ENCODE measurements at regions of chr10 and their contacts with region 1.

Region 1: DNA sequence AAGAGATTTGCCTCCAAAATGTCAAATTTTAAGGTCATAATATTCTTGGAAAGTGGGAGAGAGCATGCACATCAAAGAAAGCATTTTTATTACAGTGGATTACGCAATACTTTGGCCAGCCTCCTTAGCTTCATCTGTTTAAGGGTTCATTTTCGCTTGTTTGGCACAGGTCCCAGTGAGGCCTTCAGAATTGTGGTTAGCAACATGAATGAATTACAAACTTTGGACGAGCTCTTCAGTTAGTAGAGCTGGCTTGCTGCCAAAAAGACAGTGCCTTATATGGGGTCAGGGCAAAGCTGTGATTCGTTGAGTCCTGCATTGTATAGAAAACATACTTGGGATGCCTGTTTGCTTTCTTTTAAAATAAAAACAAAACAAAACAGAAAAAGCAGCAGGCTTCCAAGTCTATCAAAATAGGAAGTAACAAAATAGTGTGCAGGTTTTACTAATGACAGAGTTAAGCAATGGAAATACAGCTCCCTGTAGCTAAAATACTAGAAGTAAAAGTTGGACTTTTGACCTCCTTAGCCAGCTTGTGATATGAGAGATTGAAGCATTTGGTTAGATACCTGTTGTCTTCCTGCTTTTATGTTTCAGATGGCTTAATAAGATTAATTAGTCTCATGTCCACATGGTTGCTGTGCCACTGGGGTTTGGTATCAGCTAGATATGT is 190.8 kb downstream of the MLLT10 start:
- DNase-seq: peak in 4 of 9 donors; percentile 26 to 45 (median 33)
- ATAC-seq: peak; percentile 69
- H3K4me3 ChIP-seq: no peak overlapping the region
- H3K4me3 Mint-ChIP-seq: peak overlapping the region in 2 of 10 donors; percentile 29 to 46
- H3K27ac ChIP-seq: no peak overlapping the region
- H3K27ac Mint-ChIP-seq: peak overlapping the region in 6 of 9 donors; percentile 7 to 70 (median 54)
- H3K4me1 ChIP-seq: peaks cover 0 to 15% of the 10 kb centered on the region in 2 donors
- H3K4me1 Mint-ChIP-seq: peaks cover 17 to 49% (median 38%) of the 10 kb centered on the region in 7 donors
- H3K27me3 ChIP-seq: no peaks in the 10 kb centered on the region
- H3K27me3 Mint-ChIP-seq: no peaks in the 10 kb centered on the region

Region 2: GRCh38 chr10:21675157-21675796 is 49.6 kb before region 1 on chr10:
- CTCF ChIA-PET with region 1: no interaction called
- POLR2A ChIA-PET with region 1: no interaction called
- intact Hi-C with region 1: loop called in 1 of 2 experiments (anchors 5 kb)
- DNase-seq: peak in 5 of 9 donors; percentile 8 to 35 (median 14)
- ATAC-seq: peak; percentile 73
- H3K4me3 ChIP-seq: no peak overlapping the region
- H3K4me3 Mint-ChIP-seq: no peak overlapping the region
- H3K27ac ChIP-seq: no peak overlapping the region
- H3K27ac Mint-ChIP-seq: no peak overlapping the region
- H3K4me1 ChIP-seq: no peaks in the 10 kb centered on the region
- H3K4me1 Mint-ChIP-seq: peaks cover 4 to 31% (median 20%) of the 10 kb centered on the region in 7 donors
- H3K27me3 ChIP-seq: no peaks in the 10 kb centered on the region
- H3K27me3 Mint-ChIP-seq: no peaks in the 10 kb centered on the region

Region 3: GRCh38 chr10:21712975-21713374 is 11.9 kb before region 1 on chr10:
- CTCF ChIA-PET with region 1: interaction called, 4 read pairs
- POLR2A ChIA-PET with region 1: interaction called, 4 read pairs
- intact Hi-C with region 1: loop called in 1 of 2 experiments (anchors 2 kb)
- DNase-seq: no peak
- ATAC-seq: no peak
- H3K4me3 ChIP-seq: no peak overlapping the region
- H3K4me3 Mint-ChIP-seq: no peak overlapping the region
- H3K27ac ChIP-seq: no peak overlapping the region
- H3K27ac Mint-ChIP-seq: peak overlapping the region in 3 of 9 donors; percentile 13 to 20 (median 15)
- H3K4me1 ChIP-seq: no peaks in the 10 kb centered on the region
- H3K4me1 Mint-ChIP-seq: peaks cover 7 to 22% (median 14%) of the 10 kb centered on the region in 7 donors
- H3K27me3 ChIP-seq: no peaks in the 10 kb centered on the region
- H3K27me3 Mint-ChIP-seq: no peaks in the 10 kb centered on the region

Region 4: DNA sequence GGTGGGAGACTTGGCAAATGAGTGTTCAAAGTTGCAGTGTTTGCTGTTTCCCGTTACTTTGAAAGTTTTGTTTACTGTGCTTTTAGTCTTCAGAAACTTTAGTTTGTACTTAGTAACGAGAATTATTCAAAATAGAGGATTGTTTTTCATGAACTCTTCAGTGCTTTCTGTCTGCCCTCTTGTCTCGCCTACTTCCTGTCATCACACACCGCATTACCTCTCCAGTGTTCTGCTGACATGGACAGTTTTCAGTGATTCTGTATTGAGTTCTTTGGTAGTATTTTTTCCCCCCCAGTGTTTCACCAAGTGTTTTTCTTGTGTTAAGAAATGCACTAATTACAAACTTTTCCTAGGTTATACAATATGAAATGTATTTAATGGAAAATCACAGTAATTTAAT is 16.2 kb after region 1 on chr10:
- CTCF ChIA-PET with region 1: no interaction called
- POLR2A ChIA-PET with region 1: interaction called, 3 read pairs
- intact Hi-C with region 1: loop called in 1 of 2 experiments (anchors 2 kb)
- DNase-seq: peak in 7 of 9 donors; percentile 59 to 84 (median 78)
- ATAC-seq: peak; percentile 93
- H3K4me3 ChIP-seq: no peak overlapping the region
- H3K4me3 Mint-ChIP-seq: peak overlapping the region in 9 of 10 donors; percentile 12 to 73 (median 65)
- H3K27ac ChIP-seq: peak overlapping the region; percentile 70
- H3K27ac Mint-ChIP-seq: peak overlapping the region; percentile 76 to 98 (median 92)
- H3K4me1 ChIP-seq: peaks cover 14 to 55% of the 10 kb centered on the region in 2 donors
- H3K4me1 Mint-ChIP-seq: peaks cover 31 to 69% (median 60%) of the 10 kb centered on the region in 7 donors
- H3K27me3 ChIP-seq: no peaks in the 10 kb centered on the region
- H3K27me3 Mint-ChIP-seq: no peaks in the 10 kb centered on the region

Region 5: GRCh38 chr10:22054961-22055360 is 330.1 kb after region 1 on chr10:
- CTCF ChIA-PET with region 1: no interaction called
- POLR2A ChIA-PET with region 1: no interaction called
- intact Hi-C with region 1: no loop called
- DNase-seq: no peak
- ATAC-seq: no peak
- H3K4me3 ChIP-seq: no peak overlapping the region
- H3K4me3 Mint-ChIP-seq: no peak overlapping the region
- H3K27ac ChIP-seq: no peak overlapping the region
- H3K27ac Mint-ChIP-seq: peak overlapping the region in 1 of 9 donors; percentile 11
- H3K4me1 ChIP-seq: no peaks in the 10 kb centered on the region
- H3K4me1 Mint-ChIP-seq: peaks cover 0 to 5% (median 0%) of the 10 kb centered on the region in 7 donors
- H3K27me3 ChIP-seq: peaks cover 0 to 4% of the 10 kb centered on the region in 2 donors
- H3K27me3 Mint-ChIP-seq: peaks cover 0 to 10% (median 0%) of the 10 kb centered on the region in 5 donors